ENCODE measurements at regions of chr11 and their contacts with region 1.

Region 1: DNA sequence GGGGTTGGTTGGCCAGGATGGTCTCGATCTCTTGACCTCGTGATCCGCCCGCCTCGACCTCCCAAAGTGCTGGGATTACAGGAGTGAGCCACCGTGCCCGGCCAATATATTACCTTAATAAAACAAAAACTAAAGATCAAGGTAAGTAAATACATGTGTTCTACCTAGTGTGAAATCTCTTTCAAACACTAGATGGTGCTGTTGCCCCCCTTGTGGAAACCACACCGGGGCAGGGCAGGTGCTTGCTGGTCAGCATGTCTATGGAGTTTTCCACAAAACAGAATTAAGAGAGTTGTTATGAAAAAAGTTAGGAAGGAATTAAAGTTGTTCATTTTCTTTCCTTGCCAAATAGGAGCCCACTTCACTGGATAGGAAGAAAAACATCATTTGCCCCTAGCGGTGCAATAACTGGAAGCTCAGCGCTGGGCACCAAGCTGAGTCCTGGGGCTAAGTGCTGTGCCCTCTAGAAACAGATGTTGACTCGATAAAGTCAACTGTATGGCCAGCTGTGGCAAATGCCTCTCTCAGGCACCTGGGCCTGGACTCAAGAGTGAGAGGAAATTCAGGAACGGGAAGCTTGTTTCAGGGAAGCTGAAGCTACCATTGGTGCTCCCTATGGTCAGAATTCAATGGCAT is 6.3 kb upstream of the KCNJ5 start:
- DNase-seq: peak in 4 of 5 donors; percentile 59 to 70 (median 62)
- H3K4me3 ChIP-seq: no peak overlapping the region
- H3K4me3 Mint-ChIP-seq: no peak overlapping the region
- H3K27ac ChIP-seq: no peak overlapping the region
- H3K27ac Mint-ChIP-seq: no peak overlapping the region
- H3K4me1 ChIP-seq: no peaks in the 10 kb centered on the region
- H3K4me1 Mint-ChIP-seq: peaks cover 0 to 7% (median 4%) of the 10 kb centered on the region in 4 donors
- H3K27me3 ChIP-seq: peaks cover 24% of the 10 kb centered on the region
- H3K27me3 Mint-ChIP-seq: peaks cover 30 to 50% of the 10 kb centered on the region in 2 donors

Region 2: DNA sequence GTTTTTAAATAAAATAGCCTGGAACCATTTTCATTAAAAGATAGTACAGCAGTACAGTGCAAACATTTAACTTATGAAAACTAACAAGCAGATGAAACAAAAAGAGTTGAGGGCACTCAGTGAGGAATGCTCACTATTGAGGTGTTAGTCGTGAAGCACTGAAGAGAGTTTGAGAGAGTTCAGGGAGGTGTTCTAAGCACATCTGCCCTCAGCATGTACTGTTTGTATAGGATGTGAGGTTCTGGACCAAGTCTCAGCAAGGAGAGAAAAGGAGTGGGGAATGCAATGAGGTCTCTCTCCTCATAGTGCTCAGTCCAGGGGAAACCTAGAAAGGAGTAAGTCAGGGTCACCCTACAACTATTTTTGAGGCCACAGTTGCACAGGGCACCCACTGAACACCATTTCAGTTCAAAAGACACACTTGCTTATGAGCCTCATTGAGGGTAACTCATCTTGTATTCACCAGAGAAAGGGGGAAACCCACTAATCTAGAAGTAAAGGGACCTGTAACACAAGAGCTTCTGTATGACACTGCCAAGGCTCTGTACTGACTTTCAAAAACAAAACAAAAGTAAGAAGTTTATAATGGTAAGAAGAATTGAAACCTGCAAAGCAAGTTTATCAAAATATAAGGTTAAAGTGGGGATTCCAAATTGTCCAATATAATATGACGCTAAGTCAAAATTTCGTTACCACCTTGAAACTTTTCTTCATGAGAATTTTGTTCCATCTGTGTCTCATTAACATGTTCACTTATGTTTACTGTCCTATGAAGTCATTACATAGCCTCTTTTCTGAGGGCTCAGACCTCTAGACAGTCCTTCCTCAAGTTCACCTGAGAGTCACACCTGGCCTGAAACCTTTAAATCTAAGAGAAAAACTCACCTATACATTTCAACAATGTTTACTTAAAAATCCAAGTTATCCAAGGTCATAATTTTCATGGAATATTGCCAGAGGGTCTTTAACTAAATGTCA is 572.8 kb before region 1 on chr11:
- CTCF ChIA-PET with region 1: no interaction called
- POLR2A ChIA-PET with region 1: no interaction called
- intact Hi-C with region 1: no loop called
- DNase-seq: peak in 1 of 5 donors; percentile 33
- H3K4me3 ChIP-seq: no peak overlapping the region
- H3K4me3 Mint-ChIP-seq: peak overlapping the region in 6 of 8 donors; percentile 1 to 88 (median 27)
- H3K27ac ChIP-seq: no peak overlapping the region
- H3K27ac Mint-ChIP-seq: peak overlapping the region; percentile 65 to 97 (median 78)
- H3K4me1 ChIP-seq: peaks cover 66% of the 10 kb centered on the region
- H3K4me1 Mint-ChIP-seq: peaks cover 53 to 83% (median 70%) of the 10 kb centered on the region in 4 donors
- H3K27me3 ChIP-seq: no peaks in the 10 kb centered on the region
- H3K27me3 Mint-ChIP-seq: no peaks in the 10 kb centered on the region

Region 3: DNA sequence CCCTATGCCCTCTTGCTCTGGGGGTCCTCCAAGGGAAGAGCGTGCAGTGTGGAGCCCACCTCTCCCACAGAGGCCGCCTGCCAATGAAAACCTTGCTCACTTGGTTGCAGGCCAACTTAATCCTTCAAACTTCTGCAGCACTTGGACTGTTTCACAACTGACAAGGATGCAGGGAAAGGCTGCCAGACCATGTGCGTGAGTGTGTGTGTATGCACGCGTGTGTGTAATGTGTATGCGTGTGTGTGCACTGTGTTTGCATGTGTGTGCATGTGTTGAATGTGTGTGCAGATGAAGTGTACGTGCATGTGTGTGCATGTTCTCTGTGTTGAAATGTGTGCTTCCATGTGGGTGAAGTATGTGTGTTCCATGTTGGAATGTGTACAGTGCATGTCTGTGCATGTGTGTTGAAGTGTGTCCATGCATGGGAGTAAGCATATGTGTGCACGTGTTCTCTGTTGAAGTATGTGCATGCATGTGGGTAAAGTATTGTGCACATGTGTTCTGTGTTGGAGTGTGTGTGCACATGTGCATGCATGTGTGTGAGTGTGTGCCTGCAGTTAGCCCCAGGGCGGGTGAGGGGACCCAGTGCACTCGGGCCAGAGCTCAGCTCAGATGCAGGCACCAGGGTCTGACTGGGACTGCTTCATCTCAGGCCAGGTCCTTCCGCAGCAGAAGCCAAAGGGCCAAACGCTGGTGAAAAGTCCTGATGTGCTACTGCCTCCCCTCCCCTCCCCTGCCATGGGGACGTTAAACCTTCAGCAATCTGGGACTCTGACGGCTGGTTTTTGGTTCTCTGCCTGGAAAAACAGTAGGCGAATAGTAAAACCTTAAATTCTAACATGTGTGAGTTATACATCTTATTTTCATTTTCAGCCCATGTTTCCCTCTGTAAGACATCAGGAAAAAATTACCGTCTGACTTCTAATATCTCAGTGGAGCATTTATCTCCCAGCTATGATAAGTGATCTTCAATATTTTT is 119.0 kb before region 1 on chr11:
- CTCF ChIA-PET with region 1: no interaction called
- POLR2A ChIA-PET with region 1: no interaction called
- intact Hi-C with region 1: no loop called
- DNase-seq: no peak
- H3K4me3 ChIP-seq: no peak overlapping the region
- H3K4me3 Mint-ChIP-seq: no peak overlapping the region
- H3K27ac ChIP-seq: no peak overlapping the region
- H3K27ac Mint-ChIP-seq: peak overlapping the region in 2 of 7 donors; percentile 22 to 48
- H3K4me1 ChIP-seq: peaks cover 3% of the 10 kb centered on the region
- H3K4me1 Mint-ChIP-seq: peaks cover 16 to 71% (median 37%) of the 10 kb centered on the region in 4 donors
- H3K27me3 ChIP-seq: no peaks in the 10 kb centered on the region
- H3K27me3 Mint-ChIP-seq: no peaks in the 10 kb centered on the region

Region 4: GRCh38 chr11:128905345-128906184 is 20.7 kb after region 1 on chr11:
- CTCF ChIA-PET with region 1: interaction called, 104 read pairs
- POLR2A ChIA-PET with region 1: interaction called, 3 read pairs
- intact Hi-C with region 1: loop called (anchors 1 kb)
- DNase-seq: peak; percentile 43 to 59 (median 49)
- H3K4me3 ChIP-seq: peak overlapping the region in 1 of 2 donors; percentile 10
- H3K4me3 Mint-ChIP-seq: peak overlapping the region; percentile 82 to 88 (median 83)
- H3K27ac ChIP-seq: no peak overlapping the region
- H3K27ac Mint-ChIP-seq: peak overlapping the region in 1 of 7 donors; percentile 11
- H3K4me1 ChIP-seq: peaks cover 10% of the 10 kb centered on the region
- H3K4me1 Mint-ChIP-seq: peaks cover 11 to 27% (median 16%) of the 10 kb centered on the region in 4 donors
- H3K27me3 ChIP-seq: peaks cover 15% of the 10 kb centered on the region
- H3K27me3 Mint-ChIP-seq: peaks cover 17 to 18% of the 10 kb centered on the region in 2 donors

Region 5: GRCh38 chr11:128948589-128948988 is 63.8 kb after region 1 on chr11:
- CTCF ChIA-PET with region 1: interaction called, 134 read pairs
- POLR2A ChIA-PET with region 1: no interaction called
- intact Hi-C with region 1: no loop called
- DNase-seq: no peak
- H3K4me3 ChIP-seq: no peak overlapping the region
- H3K4me3 Mint-ChIP-seq: no peak overlapping the region
- H3K27ac ChIP-seq: no peak overlapping the region
- H3K27ac Mint-ChIP-seq: no peak overlapping the region
- H3K4me1 ChIP-seq: no peaks in the 10 kb centered on the region
- H3K4me1 Mint-ChIP-seq: no peaks in the 10 kb centered on the region
- H3K27me3 ChIP-seq: no peaks in the 10 kb centered on the region
- H3K27me3 Mint-ChIP-seq: peaks cover 12 to 13% of the 10 kb centered on the region in 2 donors

Region 6: DNA sequence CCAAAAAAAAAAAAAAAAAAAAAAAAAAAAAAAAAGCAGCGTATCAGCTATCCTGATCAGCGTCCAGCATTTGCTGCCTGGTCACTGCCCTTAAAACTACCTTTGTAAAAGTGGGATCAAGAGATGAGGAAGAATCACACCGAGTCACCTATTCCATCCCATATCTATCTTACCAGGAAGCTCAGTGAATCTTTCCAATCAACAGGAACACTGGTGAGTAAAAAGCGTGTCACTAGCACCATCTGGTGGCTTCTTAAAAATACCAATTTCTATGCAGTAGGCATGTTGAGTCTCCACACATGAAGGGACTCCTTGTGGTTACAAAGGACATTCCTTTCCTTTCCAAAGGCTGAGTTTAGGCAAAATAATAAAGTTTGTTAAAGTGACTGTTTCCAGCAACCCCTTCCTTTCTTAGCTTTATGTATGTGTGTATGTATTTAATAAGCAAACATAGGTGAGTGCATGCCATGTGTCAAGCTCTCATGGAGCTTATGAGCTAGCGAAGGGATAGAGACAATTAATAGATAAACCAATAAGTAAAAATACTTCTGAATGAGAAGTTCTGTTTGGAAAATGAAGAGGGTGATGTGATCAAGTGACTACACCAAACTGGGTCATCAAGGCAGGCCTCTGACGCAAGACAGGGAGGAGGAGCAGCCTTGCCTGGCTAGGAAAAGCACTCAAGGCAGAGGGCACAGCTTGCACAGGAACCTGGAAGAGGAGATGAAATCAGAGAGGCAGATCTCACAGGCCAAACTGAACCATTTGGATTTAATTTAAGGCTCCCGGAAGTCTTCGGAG is 71.8 kb after region 1 on chr11:
- CTCF ChIA-PET with region 1: interaction called, 134 read pairs
- POLR2A ChIA-PET with region 1: interaction called, 3 read pairs
- intact Hi-C with region 1: loop called (anchors 1 kb)
- DNase-seq: peak in 4 of 5 donors; percentile 34 to 41 (median 38)
- H3K4me3 ChIP-seq: no peak overlapping the region
- H3K4me3 Mint-ChIP-seq: no peak overlapping the region
- H3K27ac ChIP-seq: no peak overlapping the region
- H3K27ac Mint-ChIP-seq: no peak overlapping the region
- H3K4me1 ChIP-seq: no peaks in the 10 kb centered on the region
- H3K4me1 Mint-ChIP-seq: peaks cover 0 to 2% (median under 1%) of the 10 kb centered on the region in 4 donors
- H3K27me3 ChIP-seq: no peaks in the 10 kb centered on the region
- H3K27me3 Mint-ChIP-seq: peaks cover 6 to 14% of the 10 kb centered on the region in 2 donors

Region 7: DNA sequence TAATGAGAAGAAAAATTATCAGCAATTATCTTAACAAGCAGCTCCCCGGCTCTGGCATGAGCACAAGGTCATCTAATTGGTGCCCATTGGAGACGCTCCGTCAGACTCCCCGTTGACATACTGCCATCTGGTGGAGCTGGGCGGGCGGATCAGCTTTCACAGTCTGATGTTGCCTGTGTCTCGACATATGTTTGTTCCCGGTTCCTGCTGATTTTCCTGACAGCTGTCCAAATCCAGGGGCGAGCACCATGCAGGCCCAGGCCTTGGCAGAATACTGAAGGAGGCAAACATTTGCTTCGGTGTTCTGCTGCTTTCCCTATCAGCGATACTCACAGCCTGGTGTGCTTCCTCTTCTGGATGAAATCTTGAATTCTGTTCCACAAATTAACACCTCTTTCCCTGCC is 447.1 kb after region 1 on chr11:
- CTCF ChIA-PET with region 1: interaction called, 11 read pairs
- POLR2A ChIA-PET with region 1: no interaction called
- intact Hi-C with region 1: no loop called
- DNase-seq: peak; percentile 33 to 45 (median 36)
- H3K4me3 ChIP-seq: no peak overlapping the region
- H3K4me3 Mint-ChIP-seq: no peak overlapping the region
- H3K27ac ChIP-seq: no peak overlapping the region
- H3K27ac Mint-ChIP-seq: peak overlapping the region in 2 of 7 donors; percentile 79 to 83
- H3K4me1 ChIP-seq: no peaks in the 10 kb centered on the region
- H3K4me1 Mint-ChIP-seq: peaks cover 0 to 6% (median 2%) of the 10 kb centered on the region in 4 donors
- H3K27me3 ChIP-seq: no peaks in the 10 kb centered on the region
- H3K27me3 Mint-ChIP-seq: peaks cover 1 to 3% of the 10 kb centered on the region in 2 donors

Region 8: DNA sequence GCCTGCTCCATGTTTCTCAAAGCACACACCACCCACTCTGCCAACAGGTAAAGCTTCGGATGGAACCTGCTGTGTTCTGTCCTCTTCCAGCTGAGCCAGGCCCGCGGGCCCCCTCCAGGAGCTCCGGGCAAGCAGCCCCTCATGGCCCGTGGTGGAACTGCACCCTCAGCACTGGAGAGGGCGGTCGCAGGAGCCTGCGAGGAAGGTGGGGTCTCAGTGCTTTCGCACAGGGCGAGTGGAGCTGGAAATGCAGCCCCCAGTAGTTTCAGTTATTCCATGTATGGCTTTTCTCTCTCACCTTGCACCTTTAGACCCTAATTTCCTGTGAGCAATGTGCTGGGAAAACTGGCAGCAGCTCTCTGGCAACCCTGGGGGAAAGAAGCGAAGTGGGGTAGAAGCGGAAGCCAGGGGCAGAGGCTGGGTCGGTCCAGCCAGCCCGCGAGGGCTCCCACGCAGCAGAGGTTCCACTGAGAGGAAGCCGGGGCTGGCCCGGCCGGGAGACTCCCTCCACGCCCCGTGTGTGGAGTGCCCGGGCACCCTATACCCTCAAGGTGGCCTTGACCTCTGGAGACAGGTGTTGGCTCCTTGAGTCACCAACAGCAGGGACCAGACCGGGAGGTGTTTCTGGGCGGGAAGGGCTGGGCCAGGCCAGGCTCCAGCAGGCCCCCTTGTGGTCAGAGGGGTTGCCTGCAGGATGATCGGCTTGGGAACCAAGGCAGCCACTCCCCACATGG is 810.9 kb after region 1 on chr11:
- CTCF ChIA-PET with region 1: interaction called, 4 read pairs
- POLR2A ChIA-PET with region 1: no interaction called
- intact Hi-C with region 1: loop called (anchors 2 kb)
- DNase-seq: peak; percentile 48 to 60 (median 59)
- H3K4me3 ChIP-seq: peak overlapping the region; percentile 46 to 69
- H3K4me3 Mint-ChIP-seq: peak overlapping the region; percentile 76 to 90 (median 84)
- H3K27ac ChIP-seq: no peak overlapping the region
- H3K27ac Mint-ChIP-seq: peak overlapping the region in 4 of 7 donors; percentile 39 to 66 (median 50)
- H3K4me1 ChIP-seq: peaks cover 6% of the 10 kb centered on the region
- H3K4me1 Mint-ChIP-seq: peaks cover 7 to 19% (median 9%) of the 10 kb centered on the region in 4 donors
- H3K27me3 ChIP-seq: no peaks in the 10 kb centered on the region
- H3K27me3 Mint-ChIP-seq: no peaks in the 10 kb centered on the region